ENCODE measurements at regions of chr9 and their contacts with region 1.

Region 1: GRCh38 chr9:76576344-76576743 is 117.4 kb downstream of the GCNT1 start:
- DNase-seq: peak; percentile 76 to 81
- ATAC-seq: peak; percentile 79 to 90 (median 84)
- H3K4me3 ChIP-seq: no peak overlapping the region
- H3K4me3 Mint-ChIP-seq: peak overlapping the region; percentile 88
- H3K27ac ChIP-seq: peak overlapping the region; percentile 67
- H3K27ac Mint-ChIP-seq: peak overlapping the region; percentile 79 to 94
- H3K4me1 ChIP-seq: peaks cover 36% of the 10 kb centered on the region
- H3K4me1 Mint-ChIP-seq: peaks cover 59 to 62% of the 10 kb centered on the region in 2 donors
- H3K27me3 ChIP-seq: no peaks in the 10 kb centered on the region
- H3K27me3 Mint-ChIP-seq: no peaks in the 10 kb centered on the region
- CTCF ChIP-seq: no peak

Region 2: DNA sequence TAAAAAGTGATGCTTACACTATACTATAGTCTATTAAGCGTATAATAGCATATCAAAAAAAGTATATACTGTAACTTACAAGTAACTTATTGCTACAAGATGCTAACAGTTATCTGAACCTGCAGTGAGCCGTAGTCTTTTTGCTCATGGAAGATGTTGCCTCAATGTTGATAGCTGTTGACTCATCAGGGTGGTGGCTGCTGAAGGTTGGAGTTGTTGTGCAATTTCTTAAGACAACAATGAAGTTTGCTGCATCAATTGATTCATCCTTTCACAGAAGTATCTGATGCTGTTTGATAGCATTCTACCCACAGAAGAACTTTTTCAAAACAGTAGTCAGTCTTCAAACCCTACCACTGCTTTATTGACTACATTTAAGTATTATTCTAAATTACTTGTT is 1615.8 kb before region 1 on chr9:
- intact Hi-C with region 1: loop called (anchors 5 kb)
- DNase-seq: no peak
- ATAC-seq: peak; percentile 59 to 70 (median 60)
- H3K4me3 ChIP-seq: no peak overlapping the region
- H3K4me3 Mint-ChIP-seq: peak overlapping the region; percentile 59
- H3K27ac ChIP-seq: no peak overlapping the region
- H3K27ac Mint-ChIP-seq: peak overlapping the region; percentile 72 to 84
- H3K4me1 ChIP-seq: peaks cover 7% of the 10 kb centered on the region
- H3K4me1 Mint-ChIP-seq: peaks cover 44 to 60% of the 10 kb centered on the region in 2 donors
- H3K27me3 ChIP-seq: no peaks in the 10 kb centered on the region
- H3K27me3 Mint-ChIP-seq: no peaks in the 10 kb centered on the region
- CTCF ChIP-seq: no peak

Region 3: DNA sequence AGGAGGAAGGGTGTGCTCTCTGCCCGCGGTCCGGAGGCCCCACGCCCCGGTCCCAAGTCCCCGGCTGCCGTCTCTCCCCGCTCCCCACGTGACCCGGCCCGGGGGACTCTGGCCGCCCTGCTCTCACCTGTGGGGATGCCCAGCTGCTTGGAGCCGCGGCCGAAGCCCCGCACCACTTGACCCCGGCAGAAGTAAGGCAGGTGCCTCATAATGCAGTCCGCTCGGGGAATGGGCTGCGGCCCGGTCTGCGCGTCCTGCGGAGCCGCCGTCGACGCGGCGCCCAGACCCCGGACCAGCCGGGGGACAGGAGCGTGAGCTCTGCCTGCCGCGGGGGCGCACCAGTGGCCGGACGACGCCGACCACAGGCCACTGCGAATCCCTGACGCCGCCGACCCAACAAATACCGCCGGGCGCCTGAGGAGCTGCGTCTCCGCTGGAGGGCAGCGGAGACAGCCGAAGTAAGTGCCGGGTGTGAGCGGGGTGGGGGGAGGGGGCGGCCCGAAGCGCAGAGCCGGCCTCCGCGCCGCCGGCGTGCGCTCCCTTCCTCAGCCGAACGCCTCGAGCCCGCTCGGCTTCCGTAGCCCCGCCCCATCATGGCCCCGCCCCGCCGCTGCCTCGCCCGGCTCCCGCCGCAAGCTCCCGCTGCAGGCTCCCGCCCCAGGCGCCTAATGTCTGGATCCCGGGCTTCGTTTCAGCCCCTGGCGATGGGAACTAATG is 182.2 kb before region 1 on chr9 and contains the start of gene RFK:
- intact Hi-C with region 1: loop called (anchors 2 kb)
- DNase-seq: peak; percentile 94 to 95
- ATAC-seq: peak; percentile 88 to 98 (median 91)
- H3K4me3 ChIP-seq: peak within 1 kb of the TSS; percentile 99
- H3K4me3 Mint-ChIP-seq: peak within 1 kb of the TSS; percentile 100
- H3K27ac ChIP-seq: peak within 1 kb of the TSS; percentile 90
- H3K27ac Mint-ChIP-seq: peak within 1 kb of the TSS; percentile 98 to 99
- H3K4me1 ChIP-seq: peaks cover 15% of the 10 kb centered on the region
- H3K4me1 Mint-ChIP-seq: peaks cover 12% of the 10 kb centered on the region in 2 donors
- H3K27me3 ChIP-seq: no peaks in the 10 kb centered on the region
- H3K27me3 Mint-ChIP-seq: no peaks in the 10 kb centered on the region
- CTCF ChIP-seq: peak; percentile 41
- total RNA-seq, gene RFK: 8.7 to 11.5 (median 9.2) TPM

Region 4: GRCh38 chr9:76458903-76459690 is 117.2 kb before region 1 on chr9 and contains the start of gene GCNT1:
- intact Hi-C with region 1: loop called (anchors 5 kb)
- DNase-seq: peak; percentile 81 to 92
- ATAC-seq: peak; percentile 95 to 98 (median 96)
- H3K4me3 ChIP-seq: peak within 1 kb of the TSS; percentile 88
- H3K4me3 Mint-ChIP-seq: peak within 1 kb of the TSS; percentile 91
- H3K27ac ChIP-seq: peak within 1 kb of the TSS; percentile 39
- H3K27ac Mint-ChIP-seq: peak within 1 kb of the TSS; percentile 72 to 83
- H3K4me1 ChIP-seq: peaks cover 29% of the 10 kb centered on the region
- H3K4me1 Mint-ChIP-seq: peaks cover 24 to 33% of the 10 kb centered on the region in 2 donors
- H3K27me3 ChIP-seq: no peaks in the 10 kb centered on the region
- H3K27me3 Mint-ChIP-seq: no peaks in the 10 kb centered on the region
- CTCF ChIP-seq: no peak
- total RNA-seq, gene GCNT1: 8.6 to 23.7 (median 18.5) TPM

Region 5: DNA sequence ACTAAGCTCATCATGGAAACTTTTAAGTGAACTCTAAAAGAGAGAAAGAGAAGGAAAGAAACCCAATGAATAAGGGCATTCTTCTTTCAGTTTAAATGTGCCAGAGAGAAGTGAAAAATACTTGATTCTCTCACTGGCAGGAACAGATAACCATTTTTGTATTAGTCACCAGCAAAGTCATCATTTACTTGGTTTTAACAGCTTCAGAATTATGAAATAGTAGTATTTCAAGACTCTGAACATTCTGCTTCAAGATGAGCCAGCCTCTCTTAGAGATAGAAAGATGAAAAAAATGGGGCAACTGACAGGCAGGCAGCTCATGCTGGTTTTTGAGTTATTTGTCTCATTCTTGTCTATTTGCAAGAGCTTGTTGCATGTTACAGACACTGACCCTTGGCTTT is 13.8 kb before region 1 on chr9:
- intact Hi-C with region 1: loop called (anchors 1 kb)
- DNase-seq: no peak
- ATAC-seq: peak; percentile 38 to 59 (median 48)
- H3K4me3 ChIP-seq: no peak overlapping the region
- H3K4me3 Mint-ChIP-seq: no peak overlapping the region
- H3K27ac ChIP-seq: peak overlapping the region; percentile 3
- H3K27ac Mint-ChIP-seq: peak overlapping the region; percentile 35 to 37
- H3K4me1 ChIP-seq: peaks cover 10% of the 10 kb centered on the region
- H3K4me1 Mint-ChIP-seq: peaks cover 24 to 29% of the 10 kb centered on the region in 2 donors
- H3K27me3 ChIP-seq: no peaks in the 10 kb centered on the region
- H3K27me3 Mint-ChIP-seq: peaks cover 0 to 2% of the 10 kb centered on the region in 2 donors
- CTCF ChIP-seq: no peak

Region 6: GRCh38 chr9:76610011-76610352 is 33.6 kb after region 1 on chr9:
- intact Hi-C with region 1: loop called (anchors 5 kb)
- DNase-seq: no peak
- ATAC-seq: no peak
- H3K4me3 ChIP-seq: no peak overlapping the region
- H3K4me3 Mint-ChIP-seq: no peak overlapping the region
- H3K27ac ChIP-seq: no peak overlapping the region
- H3K27ac Mint-ChIP-seq: no peak overlapping the region
- H3K4me1 ChIP-seq: peaks cover 13% of the 10 kb centered on the region
- H3K4me1 Mint-ChIP-seq: peaks cover 25 to 36% of the 10 kb centered on the region in 2 donors
- H3K27me3 ChIP-seq: no peaks in the 10 kb centered on the region
- H3K27me3 Mint-ChIP-seq: no peaks in the 10 kb centered on the region
- CTCF ChIP-seq: no peak

Region 7: DNA sequence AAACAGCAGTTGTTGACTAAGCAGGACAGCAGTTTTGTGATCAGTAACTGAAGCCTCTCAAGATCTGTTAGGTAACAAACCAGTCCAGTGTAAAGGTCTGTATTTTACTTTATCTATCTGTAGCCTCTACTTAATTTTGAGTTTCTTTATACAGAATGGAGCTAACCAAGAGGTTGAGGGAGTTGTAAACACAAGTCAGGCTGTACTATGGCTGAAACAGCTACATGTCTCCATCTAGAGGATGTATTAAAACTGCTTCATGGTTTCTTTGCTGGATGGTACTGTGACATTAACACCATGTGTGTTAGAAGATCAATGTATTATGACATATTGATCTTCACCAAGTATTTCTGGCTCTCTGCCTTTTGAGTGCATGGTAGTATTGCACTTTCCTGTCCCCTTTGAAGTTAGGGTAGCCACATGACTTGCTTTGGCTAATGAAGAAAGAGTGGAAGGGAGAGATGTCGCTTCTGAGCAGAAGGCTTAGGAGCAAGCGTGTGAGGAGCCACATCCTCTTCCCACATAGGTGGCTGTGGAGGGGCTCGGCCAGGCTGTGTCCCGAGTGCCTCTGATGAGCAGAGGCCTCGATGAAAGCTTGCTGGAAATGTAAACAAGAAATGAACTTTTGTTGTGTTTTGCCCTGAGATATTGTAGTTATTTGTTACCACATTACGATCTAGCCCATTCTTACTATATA is 82.3 kb after region 1 on chr9:
- intact Hi-C with region 1: loop called (anchors 1 kb)
- DNase-seq: peak in 1 of 2 donors; percentile 69
- ATAC-seq: peak; percentile 70 to 82 (median 75)
- H3K4me3 ChIP-seq: no peak overlapping the region
- H3K4me3 Mint-ChIP-seq: no peak overlapping the region
- H3K27ac ChIP-seq: no peak overlapping the region
- H3K27ac Mint-ChIP-seq: peak overlapping the region; percentile 5 to 85
- H3K4me1 ChIP-seq: peaks cover 9% of the 10 kb centered on the region
- H3K4me1 Mint-ChIP-seq: peaks cover 56 to 63% of the 10 kb centered on the region in 2 donors
- H3K27me3 ChIP-seq: no peaks in the 10 kb centered on the region
- H3K27me3 Mint-ChIP-seq: no peaks in the 10 kb centered on the region
- CTCF ChIP-seq: peak; percentile 70